K562 (cell line): ENCODE measurements at regions of chr10 and their contacts with region 1.

Region 1: GRCh38 chr10:68526626-68527307 is 556 bp downstream of the SLC25A16 start:
- DNase-seq: no peak
- ATAC-seq: peak; percentile 74
- H3K4me3 ChIP-seq: peak overlapping the region; percentile 100
- H3K27ac ChIP-seq: peak overlapping the region; percentile 75
- H3K4me1 ChIP-seq: peaks cover 4 to 18% of the 10 kb centered on the region in 2 experiments; a peak in 2 of 5 replicates
- H3K27me3 ChIP-seq: no peaks in the 10 kb centered on the region
- CTCF ChIP-seq: no peak
- EP300 ChIP-seq: no peak
- POLR2A ChIP-seq: no peak
- RAD21 ChIP-seq: no peak

Region 2: GRCh38 chr10:68276224-68276623 is 250.5 kb before region 1 on chr10:
- CTCF ChIA-PET with region 1: no interaction called
- POLR2A ChIA-PET with region 1: no interaction called
- in situ Hi-C with region 1: no loop called
- intact Hi-C with region 1: no loop called
- DNase-seq: no peak
- ATAC-seq: no peak
- H3K4me3 ChIP-seq: no peak overlapping the region
- H3K27ac ChIP-seq: no peak overlapping the region
- H3K4me1 ChIP-seq: peaks cover 0 to 5% of the 10 kb centered on the region in 2 experiments; a peak in 2 of 5 replicates
- H3K27me3 ChIP-seq: no peaks in the 10 kb centered on the region; a peak in 1 of 5 replicates
- CTCF ChIP-seq: no peak
- EP300 ChIP-seq: no peak
- POLR2A ChIP-seq: no peak
- RAD21 ChIP-seq: no peak

Region 3: DNA sequence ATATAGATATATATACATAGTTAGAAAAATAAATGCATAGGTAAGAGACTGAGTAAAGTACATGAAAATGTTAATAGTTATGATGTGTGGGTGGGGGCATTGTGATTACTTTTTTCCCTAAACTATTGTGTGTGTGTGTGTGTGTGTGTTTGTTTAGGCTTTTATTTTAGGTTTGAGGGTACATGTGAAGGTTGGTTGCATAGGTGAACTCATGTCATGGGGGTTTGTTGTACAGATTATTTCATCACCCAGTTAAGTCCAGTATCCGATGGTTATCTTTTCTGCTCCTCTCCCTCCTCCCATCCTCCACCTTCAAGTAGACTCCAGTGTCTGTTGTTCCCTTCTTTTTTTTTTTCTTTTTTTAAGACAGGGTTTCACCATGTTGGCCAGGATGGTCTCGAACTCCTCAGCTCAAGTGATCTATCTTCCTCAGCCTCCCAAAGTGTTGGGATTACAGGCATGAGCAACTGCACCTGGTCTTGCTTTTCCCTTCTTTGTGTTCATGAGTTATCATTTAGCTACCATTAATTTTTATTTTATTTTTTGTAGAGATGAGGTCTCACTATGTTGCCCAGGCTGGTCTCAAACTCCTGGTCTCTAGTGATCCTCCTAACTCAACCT is 117.8 kb before region 1 on chr10:
- CTCF ChIA-PET with region 1: no interaction called
- POLR2A ChIA-PET with region 1: no interaction called
- in situ Hi-C with region 1: no loop called
- intact Hi-C with region 1: no loop called
- DNase-seq: no peak
- ATAC-seq: no peak
- H3K4me3 ChIP-seq: no peak overlapping the region
- H3K27ac ChIP-seq: no peak overlapping the region
- H3K4me1 ChIP-seq: peaks cover 14 to 22% of the 10 kb centered on the region in 2 experiments; a peak in 4 of 5 replicates
- H3K27me3 ChIP-seq: no peaks in the 10 kb centered on the region
- CTCF ChIP-seq: no peak
- EP300 ChIP-seq: peak; percentile 55; the same call in 1 of the 2 replicates
- POLR2A ChIP-seq: no peak
- RAD21 ChIP-seq: no peak

Region 4: DNA sequence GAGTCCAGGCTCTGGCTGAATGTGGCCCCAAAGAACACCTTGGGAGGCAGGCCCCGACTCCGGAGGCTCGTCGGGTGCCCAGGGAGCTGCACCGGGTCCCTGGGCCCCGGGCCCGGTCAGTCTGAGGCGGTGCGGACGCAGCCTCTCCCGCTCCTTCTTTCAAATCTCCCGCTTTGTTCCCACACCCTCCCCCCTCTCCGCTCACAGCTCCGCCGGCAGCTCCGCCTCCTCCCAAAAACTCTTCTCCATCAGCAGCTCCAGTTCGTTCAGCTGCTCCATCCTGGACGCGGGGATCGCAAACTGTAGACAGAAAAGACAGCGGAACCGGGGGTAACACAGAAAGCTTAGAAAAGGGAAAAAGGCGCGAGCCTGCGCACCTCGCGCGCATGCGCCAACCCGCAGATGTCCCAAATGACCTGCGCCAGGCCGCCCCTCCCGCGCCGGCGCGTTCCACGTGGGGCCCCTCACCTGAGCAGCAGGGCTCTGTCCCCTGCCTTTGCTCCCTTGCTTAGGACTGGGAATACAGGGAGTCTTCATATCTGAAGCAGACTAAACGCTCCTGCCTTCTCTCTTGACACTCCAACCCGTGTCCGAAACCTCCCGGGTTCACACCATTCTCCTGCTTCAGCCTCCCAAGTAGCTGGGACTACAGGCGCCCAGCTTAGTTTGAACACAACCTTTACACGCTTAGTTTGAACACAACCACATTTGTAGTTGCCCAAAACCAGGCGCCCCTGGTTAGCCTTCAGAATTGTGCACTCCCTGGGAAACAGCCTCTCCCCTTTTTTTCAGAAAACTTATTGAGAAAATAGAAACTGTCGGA is 55.0 kb before region 1 on chr10 and contains the start of gene DNA2:
- CTCF ChIA-PET with region 1: no interaction called
- POLR2A ChIA-PET with region 1: no interaction called
- in situ Hi-C with region 1: no loop called
- intact Hi-C with region 1: loop called (anchors 2 kb)
- DNase-seq: peak; percentile 94 to 97 (median 96)
- ATAC-seq: peak; percentile 90
- H3K4me3 ChIP-seq: peak within 1 kb of the TSS; percentile 60
- H3K27ac ChIP-seq: peak within 1 kb of the TSS; percentile 89
- H3K4me1 ChIP-seq: peaks cover 9 to 11% of the 10 kb centered on the region in 2 experiments; a peak in 4 of 5 replicates
- H3K27me3 ChIP-seq: no peaks in the 10 kb centered on the region
- CTCF ChIP-seq: no peak
- EP300 ChIP-seq: no peak
- POLR2A ChIP-seq: peak; percentile 90
- RAD21 ChIP-seq: peak; percentile 1 to 15; a peak in 1 of 4 replicates
- polyA plus RNA-seq, gene DNA2: 24.7 to 32.7 TPM

Region 5: GRCh38 chr10:68697106-68697505 is 170.3 kb after region 1 on chr10:
- CTCF ChIA-PET with region 1: no interaction called
- POLR2A ChIA-PET with region 1: no interaction called
- in situ Hi-C with region 1: no loop called
- intact Hi-C with region 1: no loop called
- DNase-seq: no peak
- ATAC-seq: no peak
- H3K4me3 ChIP-seq: no peak overlapping the region
- H3K27ac ChIP-seq: no peak overlapping the region
- H3K4me1 ChIP-seq: no peaks in the 10 kb centered on the region
- H3K27me3 ChIP-seq: no peaks in the 10 kb centered on the region
- CTCF ChIP-seq: no peak
- EP300 ChIP-seq: no peak
- POLR2A ChIP-seq: no peak
- RAD21 ChIP-seq: no peak